ENCODE measurements at regions of chr7 and their contacts with region 1.

Region 1: GRCh38 chr7:128791121-128791961 is 427 bp upstream of the CCDC136 start:
- DNase-seq: peak; percentile 66 to 88
- H3K4me3 ChIP-seq: peak overlapping the region; percentile 77
- H3K27ac ChIP-seq: peak overlapping the region; percentile 67 to 73
- H3K4me1 ChIP-seq: peaks cover 0 to 23% (median 18%) of the 10 kb centered on the region in 4 donors
- H3K27me3 ChIP-seq: no peaks in the 10 kb centered on the region
- CTCF ChIP-seq: no peak

Region 2: DNA sequence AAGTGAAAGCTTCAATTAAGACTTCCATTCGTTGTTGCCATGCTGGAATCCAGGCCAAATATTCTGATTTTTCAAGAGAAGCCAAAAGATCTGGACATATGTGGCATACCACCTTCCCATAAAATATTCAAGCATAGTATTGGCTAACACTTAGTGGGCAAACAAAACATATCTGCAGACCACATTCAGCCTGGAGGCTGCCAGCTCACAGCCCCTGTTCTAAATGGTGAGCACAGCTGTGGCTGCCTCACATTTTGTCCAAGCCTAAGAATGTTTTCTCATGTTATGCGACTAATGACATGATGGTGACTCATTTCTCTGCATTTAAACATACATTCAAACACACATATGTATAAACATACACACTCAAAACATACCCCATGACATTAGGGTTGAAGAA is 62.7 kb before region 1 on chr7:
- intact Hi-C with region 1: no loop called
- DNase-seq: no peak
- H3K4me3 ChIP-seq: no peak overlapping the region
- H3K27ac ChIP-seq: no peak overlapping the region
- H3K4me1 ChIP-seq: no peaks in the 10 kb centered on the region
- H3K27me3 ChIP-seq: peaks cover 0 to 6% of the 10 kb centered on the region in 2 donors
- CTCF ChIP-seq: no peak

Region 3: GRCh38 chr7:128827248-128827958 is 36.1 kb after region 1 on chr7:
- intact Hi-C with region 1: loop called (anchors 5 kb)
- DNase-seq: peak; percentile 59 to 88
- H3K4me3 ChIP-seq: no peak overlapping the region
- H3K27ac ChIP-seq: peak overlapping the region; percentile 73 to 83
- H3K4me1 ChIP-seq: peaks cover 0 to 50% (median 39%) of the 10 kb centered on the region in 4 donors
- H3K27me3 ChIP-seq: no peaks in the 10 kb centered on the region
- CTCF ChIP-seq: no peak

Region 4: GRCh38 chr7:128982105-128982504 is 190.8 kb after region 1 on chr7:
- intact Hi-C with region 1: no loop called
- DNase-seq: no peak
- H3K4me3 ChIP-seq: no peak overlapping the region
- H3K27ac ChIP-seq: no peak overlapping the region
- H3K4me1 ChIP-seq: no peaks in the 10 kb centered on the region
- H3K27me3 ChIP-seq: no peaks in the 10 kb centered on the region
- CTCF ChIP-seq: no peak

Region 5: DNA sequence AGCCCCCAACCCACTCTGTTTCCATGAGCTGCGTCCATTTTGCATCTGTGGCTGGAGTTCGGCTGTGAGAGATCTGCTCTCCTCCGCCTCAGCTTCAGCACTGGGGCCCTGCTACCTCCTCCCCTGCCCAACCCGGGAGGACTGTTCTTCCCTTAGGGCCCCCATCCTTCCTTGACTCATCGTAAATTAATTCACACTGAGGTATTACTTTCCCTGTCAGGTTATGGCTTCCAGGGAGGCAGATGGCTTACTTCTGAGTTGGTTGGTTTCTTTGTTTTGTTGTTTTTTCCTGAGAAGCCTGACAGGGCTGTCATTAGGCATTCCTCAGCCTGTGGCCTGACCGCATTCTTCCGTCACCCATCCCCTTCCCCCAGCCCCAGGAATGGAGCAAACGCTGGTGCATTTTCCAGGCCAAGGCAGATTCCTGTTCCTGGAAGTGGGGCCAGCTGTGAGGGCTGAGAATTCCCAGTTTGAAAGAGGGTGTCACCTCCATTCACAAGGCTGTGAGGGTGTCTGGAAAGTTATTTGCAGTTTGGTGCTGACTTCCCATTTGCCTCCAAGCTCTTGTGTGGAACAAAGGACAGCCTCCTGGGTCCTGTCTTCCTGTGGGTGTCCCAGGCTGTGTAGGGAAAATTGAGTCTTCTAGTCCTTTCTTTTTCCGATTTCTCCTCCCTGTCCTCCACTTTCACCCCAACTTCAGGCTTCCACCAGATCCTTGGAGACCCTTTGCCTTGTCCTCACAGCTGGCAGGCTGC is 1565.0 kb after region 1 on chr7:
- intact Hi-C with region 1: no loop called
- DNase-seq: peak in 1 of 2 donors; percentile 34
- H3K4me3 ChIP-seq: no peak overlapping the region
- H3K27ac ChIP-seq: peak overlapping the region; percentile 67 to 77
- H3K4me1 ChIP-seq: peaks cover 0 to 49% (median 40%) of the 10 kb centered on the region in 4 donors
- H3K27me3 ChIP-seq: no peaks in the 10 kb centered on the region
- CTCF ChIP-seq: no peak